AG04450 (cell line): ENCODE measurements at regions of chr5 and their contacts with region 1.

Region 1: GRCh38 chr5:8919096-8919495 is 626.8 kb downstream of the SEMA5A start:
- DNase-seq: no peak
- H3K4me3 ChIP-seq: no peak overlapping the region
- H3K27ac ChIP-seq: no peak overlapping the region
- H3K27me3 ChIP-seq: no peaks in the 10 kb centered on the region
- CTCF ChIP-seq: no peak

Region 2: DNA sequence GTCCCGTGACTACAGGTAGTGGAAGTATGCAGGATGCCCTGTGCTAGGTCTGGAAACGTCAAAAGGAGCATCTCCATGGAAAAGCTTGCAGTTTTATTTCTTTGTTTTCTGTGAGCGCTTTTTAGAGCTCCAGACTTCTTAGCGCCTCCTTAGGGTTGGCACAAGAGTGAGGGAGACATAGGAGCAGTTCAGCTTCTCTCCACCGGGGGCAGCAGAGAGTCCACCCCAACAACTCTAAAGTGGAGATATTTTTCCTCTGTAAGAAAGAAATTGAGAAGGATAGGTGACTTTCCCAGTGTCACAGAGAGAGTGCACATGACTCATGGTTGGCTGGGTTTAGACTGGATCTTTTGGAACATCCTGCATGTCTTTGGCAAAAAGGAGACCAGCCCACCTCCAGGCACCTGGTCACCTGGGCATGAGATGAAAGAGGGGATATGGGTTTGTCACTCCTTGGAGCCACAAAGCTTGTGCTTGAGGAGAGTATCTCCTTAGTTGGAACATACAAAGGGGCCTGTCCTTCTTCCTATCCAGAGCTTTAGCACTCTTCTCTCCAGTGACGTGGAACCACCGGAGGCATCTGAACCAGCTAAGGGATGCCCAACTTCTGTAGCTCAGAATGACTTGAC is 10.9 kb before region 1 on chr5:
- CTCF ChIA-PET with region 1: interaction called, 10 read pairs
- POLR2A ChIA-PET with region 1: no interaction called
- DNase-seq: no peak
- H3K4me3 ChIP-seq: no peak overlapping the region
- H3K27ac ChIP-seq: peak overlapping the region; percentile 59
- H3K27me3 ChIP-seq: no peaks in the 10 kb centered on the region
- CTCF ChIP-seq: peak; percentile 77

Region 3: GRCh38 chr5:8961956-8962355 is 42.9 kb after region 1 on chr5:
- CTCF ChIA-PET with region 1: no interaction called
- POLR2A ChIA-PET with region 1: no interaction called
- DNase-seq: no peak
- H3K4me3 ChIP-seq: no peak overlapping the region
- H3K27ac ChIP-seq: no peak overlapping the region
- H3K27me3 ChIP-seq: no peaks in the 10 kb centered on the region
- CTCF ChIP-seq: no peak